GM12878 (cell line): ENCODE measurements at regions of chr22 and their contacts with region 1.

Region 1: GRCh38 chr22:42217019-42217751 is 53.3 kb downstream of the TCF20 start:
- DNase-seq: peak; percentile 19
- ATAC-seq: peak; percentile 56
- H3K4me3 ChIP-seq: no peak overlapping the region
- H3K27ac ChIP-seq: peak overlapping the region; percentile 66
- H3K4me1 ChIP-seq: peaks cover 23% of the 10 kb centered on the region
- H3K27me3 ChIP-seq: no peaks in the 10 kb centered on the region
- CTCF ChIP-seq: no peak
- EP300 ChIP-seq: no peak
- POLR2A ChIP-seq: no peak
- RAD21 ChIP-seq: no peak

Region 2: DNA sequence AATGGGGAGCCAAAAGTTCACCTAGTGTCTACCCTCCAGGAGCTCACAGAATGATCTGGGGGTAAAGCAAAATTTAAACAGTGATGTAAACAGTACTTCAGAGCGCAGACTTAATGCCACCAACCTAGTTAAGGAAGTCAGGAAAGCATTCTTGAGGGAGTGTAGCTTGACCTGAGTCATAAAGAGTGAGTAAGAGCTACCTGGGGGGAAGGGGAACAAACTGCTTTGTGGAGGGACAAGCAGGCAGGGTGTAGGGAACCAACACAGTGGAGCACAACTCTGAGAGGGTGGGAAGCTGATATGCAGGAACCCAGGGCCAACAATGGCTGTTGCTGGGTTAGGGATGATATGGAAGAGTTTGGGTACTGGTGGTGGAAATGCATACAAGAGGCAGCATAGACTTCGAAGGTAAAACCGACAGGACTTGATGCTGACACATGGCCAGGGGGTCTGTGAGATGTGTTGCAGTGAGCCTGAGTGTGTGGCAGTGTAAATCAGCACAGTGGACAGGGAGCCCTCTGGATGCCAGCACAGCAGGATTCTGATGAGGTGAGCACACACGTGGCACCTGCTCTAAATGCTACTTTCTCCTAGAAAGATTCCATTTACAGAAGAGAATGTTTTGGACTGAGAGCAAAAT is 28.3 kb before region 1 on chr22:
- CTCF ChIA-PET with region 1: no interaction called
- POLR2A ChIA-PET with region 1: interaction called, 3 read pairs
- RAD21 ChIA-PET with region 1: no interaction called
- SMC1A ChIA-PET with region 1: interaction called, 13 read pairs
- in situ Hi-C with region 1: no loop called
- intact Hi-C with region 1: no loop called
- DNase-seq: no peak
- ATAC-seq: no peak
- H3K4me3 ChIP-seq: no peak overlapping the region
- H3K27ac ChIP-seq: no peak overlapping the region
- H3K4me1 ChIP-seq: no peaks in the 10 kb centered on the region
- H3K27me3 ChIP-seq: no peaks in the 10 kb centered on the region
- CTCF ChIP-seq: no peak
- EP300 ChIP-seq: no peak
- POLR2A ChIP-seq: no peak
- RAD21 ChIP-seq: no peak

Region 3: GRCh38 chr22:42228483-42228882 is 11.3 kb after region 1 on chr22:
- CTCF ChIA-PET with region 1: interaction called, 4 read pairs
- POLR2A ChIA-PET with region 1: interaction called, 3 read pairs
- RAD21 ChIA-PET with region 1: interaction called, 3 read pairs
- SMC1A ChIA-PET with region 1: interaction called, 15 read pairs
- in situ Hi-C with region 1: no loop called
- intact Hi-C with region 1: no loop called
- DNase-seq: no peak
- ATAC-seq: no peak
- H3K4me3 ChIP-seq: no peak overlapping the region
- H3K27ac ChIP-seq: no peak overlapping the region
- H3K4me1 ChIP-seq: peaks cover 5% of the 10 kb centered on the region; the same call in 1 of the 2 replicates
- H3K27me3 ChIP-seq: no peaks in the 10 kb centered on the region
- CTCF ChIP-seq: no peak
- EP300 ChIP-seq: no peak
- POLR2A ChIP-seq: no peak
- RAD21 ChIP-seq: no peak